ENCODE measurements at regions of chr11 and their contacts with region 1.

Region 1: DNA sequence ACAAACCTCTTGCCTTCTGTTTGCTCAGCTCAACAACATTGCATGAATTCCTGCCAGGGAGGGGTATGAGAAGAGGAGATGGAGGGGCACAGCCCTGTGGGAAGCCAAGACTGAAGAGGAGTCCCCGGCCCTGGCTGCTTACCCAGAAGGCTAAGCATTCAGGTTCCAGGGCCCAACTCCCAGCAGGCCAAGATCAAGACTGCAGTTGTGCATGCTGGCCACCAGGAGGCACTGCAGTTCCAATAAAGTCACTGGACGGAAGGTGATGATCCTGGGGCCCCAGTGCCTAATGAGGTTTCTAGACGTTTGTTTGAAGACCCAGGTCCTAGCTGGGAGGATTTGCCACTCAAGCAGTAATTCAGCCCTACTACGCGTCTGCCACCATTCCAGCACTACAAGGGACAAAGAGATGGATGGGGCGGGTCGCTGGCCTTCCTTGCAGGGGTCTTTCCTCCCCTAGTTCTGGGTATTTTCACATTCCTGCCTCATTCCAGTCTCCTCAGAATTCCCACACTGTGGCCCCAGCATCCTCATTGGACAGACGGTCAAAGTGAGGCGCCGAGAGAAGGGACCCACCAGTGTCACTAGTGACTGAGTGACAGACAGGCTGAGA is 23.6 kb downstream of the ALX4 start:
- DNase-seq: peak; percentile 80
- ATAC-seq: peak; percentile 85
- H3K4me3 Mint-ChIP-seq: no peak overlapping the region
- H3K27ac Mint-ChIP-seq: no peak overlapping the region
- H3K4me1 Mint-ChIP-seq: no peaks in the 10 kb centered on the region
- H3K27me3 Mint-ChIP-seq: peaks cover 2% of the 10 kb centered on the region

Region 2: DNA sequence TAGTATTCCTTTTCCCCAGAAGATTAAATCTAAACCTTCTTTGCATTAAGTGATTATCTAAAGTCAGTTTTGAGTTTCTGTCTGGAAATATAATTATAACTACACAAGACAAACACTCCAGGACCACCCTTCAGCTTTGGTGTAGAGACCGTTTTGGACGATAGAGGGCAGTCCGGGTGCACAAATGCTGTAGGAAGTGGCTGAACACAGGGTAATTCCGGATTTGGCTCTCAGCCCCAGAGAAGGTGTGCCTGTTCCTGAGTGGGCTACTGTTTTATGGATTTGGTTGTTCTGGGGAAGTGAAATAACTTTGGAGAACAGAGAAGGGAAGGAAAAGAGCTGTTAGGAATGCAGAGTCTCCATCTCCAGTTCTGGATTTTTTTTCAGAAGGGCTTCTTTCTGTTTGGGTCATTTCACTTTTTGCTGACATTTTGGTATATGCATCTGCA is 176.1 kb before region 1 on chr11:
- CTCF ChIA-PET with region 1: no interaction called
- POLR2A ChIA-PET with region 1: no interaction called
- intact Hi-C with region 1: loop called in 1 of 2 experiments (anchors 10 kb)
- DNase-seq: peak; percentile 76
- ATAC-seq: peak; percentile 94
- H3K4me3 Mint-ChIP-seq: no peak overlapping the region
- H3K27ac Mint-ChIP-seq: peak overlapping the region; percentile 48
- H3K4me1 Mint-ChIP-seq: peaks cover 9% of the 10 kb centered on the region
- H3K27me3 Mint-ChIP-seq: no peaks in the 10 kb centered on the region

Region 3: DNA sequence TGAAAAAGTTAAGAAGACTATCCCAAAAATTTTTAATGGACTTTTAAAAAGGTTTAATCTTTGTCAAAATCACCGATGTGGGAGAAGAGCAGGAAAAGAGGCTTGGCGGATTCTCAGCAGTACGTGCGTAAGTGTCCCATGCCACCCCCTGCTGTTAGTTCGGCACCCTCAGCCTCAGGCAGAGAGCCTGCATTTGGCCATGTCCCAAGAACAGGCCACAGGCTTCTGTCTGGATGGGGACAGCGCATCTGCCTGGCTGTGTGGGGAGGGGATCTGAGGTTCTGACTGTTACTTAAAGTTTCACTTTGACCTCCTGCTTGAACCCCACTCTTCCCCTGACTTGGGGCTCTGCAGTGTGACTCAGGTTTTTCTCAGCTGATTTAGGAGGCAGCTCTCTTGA is 155.6 kb before region 1 on chr11:
- CTCF ChIA-PET with region 1: no interaction called
- POLR2A ChIA-PET with region 1: no interaction called
- intact Hi-C with region 1: no loop called
- DNase-seq: no peak
- ATAC-seq: no peak
- H3K4me3 Mint-ChIP-seq: no peak overlapping the region
- H3K27ac Mint-ChIP-seq: no peak overlapping the region
- H3K4me1 Mint-ChIP-seq: no peaks in the 10 kb centered on the region
- H3K27me3 Mint-ChIP-seq: no peaks in the 10 kb centered on the region

Region 4: DNA sequence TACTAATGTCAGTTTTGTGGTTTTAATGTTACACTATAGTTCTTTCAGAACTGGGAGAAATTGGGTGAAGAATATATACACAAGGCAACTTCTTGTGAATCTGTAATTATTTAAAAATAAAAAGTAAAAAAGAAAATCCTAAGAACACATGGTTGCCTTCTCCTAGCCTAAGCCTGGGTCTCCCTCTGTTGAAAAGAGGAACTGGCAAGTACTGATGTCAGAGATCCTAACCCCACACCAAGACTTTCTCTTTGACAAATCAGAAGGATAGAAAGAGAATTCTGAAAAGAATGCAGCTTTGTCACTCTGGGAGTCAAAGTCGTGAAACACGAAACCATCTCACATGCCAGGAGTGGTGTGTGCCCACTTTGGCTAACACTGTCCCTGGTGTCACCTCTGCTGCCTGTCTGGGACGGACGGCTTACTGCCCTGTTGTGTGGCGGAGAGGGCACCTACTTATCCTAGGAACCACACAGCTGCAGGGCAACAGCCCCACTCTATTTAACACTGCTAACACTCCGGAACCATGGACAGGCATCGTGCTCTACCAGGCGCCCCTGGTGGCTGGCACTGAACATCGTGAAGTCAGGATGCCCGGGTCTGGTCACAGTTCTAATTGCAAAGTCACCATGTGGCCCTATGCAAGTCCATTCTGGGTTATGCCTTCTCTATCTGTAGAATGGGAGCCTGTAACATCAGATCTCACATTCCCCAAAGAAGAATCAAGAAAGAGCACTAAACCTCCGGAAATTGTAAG is 170.3 kb after region 1 on chr11:
- CTCF ChIA-PET with region 1: no interaction called
- POLR2A ChIA-PET with region 1: no interaction called
- intact Hi-C with region 1: no loop called
- DNase-seq: no peak
- ATAC-seq: no peak
- H3K4me3 Mint-ChIP-seq: no peak overlapping the region
- H3K27ac Mint-ChIP-seq: no peak overlapping the region
- H3K4me1 Mint-ChIP-seq: no peaks in the 10 kb centered on the region
- H3K27me3 Mint-ChIP-seq: no peaks in the 10 kb centered on the region

Region 5: GRCh38 chr11:44519989-44520737 is 233.8 kb after region 1 on chr11:
- CTCF ChIA-PET with region 1: interaction called, 5 read pairs
- POLR2A ChIA-PET with region 1: no interaction called
- intact Hi-C with region 1: loop called in 1 of 2 experiments (anchors 1 kb)
- DNase-seq: no peak
- ATAC-seq: no peak
- H3K4me3 Mint-ChIP-seq: no peak overlapping the region
- H3K27ac Mint-ChIP-seq: no peak overlapping the region
- H3K4me1 Mint-ChIP-seq: peaks cover 2% of the 10 kb centered on the region
- H3K27me3 Mint-ChIP-seq: peaks cover 12% of the 10 kb centered on the region

Region 6: GRCh38 chr11:44621140-44621681 is 334.8 kb after region 1 on chr11:
- CTCF ChIA-PET with region 1: no interaction called
- POLR2A ChIA-PET with region 1: no interaction called
- intact Hi-C with region 1: loop called in 1 of 2 experiments (anchors 10 kb)
- DNase-seq: peak; percentile 78
- ATAC-seq: peak; percentile 52
- H3K4me3 Mint-ChIP-seq: no peak overlapping the region
- H3K27ac Mint-ChIP-seq: no peak overlapping the region
- H3K4me1 Mint-ChIP-seq: peaks cover 38% of the 10 kb centered on the region
- H3K27me3 Mint-ChIP-seq: no peaks in the 10 kb centered on the region

Region 7: DNA sequence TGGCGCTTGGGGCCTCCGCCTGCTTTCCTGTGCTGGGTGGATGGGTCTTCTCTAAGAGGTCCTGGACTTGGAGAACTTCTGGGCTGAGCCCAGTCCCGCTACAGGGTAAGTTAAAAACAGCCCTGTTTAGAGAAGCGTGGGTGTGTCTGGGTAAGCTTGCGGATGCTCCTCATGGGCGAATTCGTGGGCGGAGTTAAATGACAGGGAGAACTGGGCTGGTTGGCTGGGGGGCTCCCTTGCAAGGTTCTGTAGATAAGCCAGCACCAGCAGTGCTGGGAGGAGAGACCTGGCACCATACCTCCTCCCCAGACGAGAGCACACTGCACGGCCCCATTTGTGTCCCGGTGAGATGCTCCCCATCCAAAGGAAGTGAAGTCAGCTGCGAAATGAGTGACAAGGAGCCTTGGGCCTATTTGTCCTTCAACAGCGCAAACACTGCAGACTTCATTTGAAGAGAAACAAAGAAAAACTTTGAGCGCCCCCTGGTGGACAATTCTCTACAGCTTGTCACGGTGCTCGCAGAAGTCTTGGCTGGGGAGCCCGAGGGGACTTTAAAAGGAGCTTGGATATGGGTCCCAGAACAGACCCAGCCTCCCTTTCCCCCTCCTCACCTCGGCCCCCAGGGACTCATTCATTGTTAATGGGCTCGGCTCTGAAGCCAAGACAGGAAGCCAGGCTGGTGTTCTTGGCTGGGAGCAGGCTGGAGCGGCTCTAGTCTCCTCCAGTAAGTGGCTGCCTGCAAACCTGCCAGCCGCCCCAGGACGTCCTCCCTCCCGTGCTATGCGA is 624.8 kb after region 1 on chr11:
- CTCF ChIA-PET with region 1: no interaction called
- POLR2A ChIA-PET with region 1: no interaction called
- intact Hi-C with region 1: loop called in 1 of 2 experiments (anchors 5 kb)
- DNase-seq: peak; percentile 93
- ATAC-seq: peak; percentile 91
- H3K4me3 Mint-ChIP-seq: no peak overlapping the region
- H3K27ac Mint-ChIP-seq: no peak overlapping the region
- H3K4me1 Mint-ChIP-seq: peaks cover 3% of the 10 kb centered on the region
- H3K27me3 Mint-ChIP-seq: no peaks in the 10 kb centered on the region